ENCODE measurements at regions of chrX and their contacts with region 1.

Region 1: DNA sequence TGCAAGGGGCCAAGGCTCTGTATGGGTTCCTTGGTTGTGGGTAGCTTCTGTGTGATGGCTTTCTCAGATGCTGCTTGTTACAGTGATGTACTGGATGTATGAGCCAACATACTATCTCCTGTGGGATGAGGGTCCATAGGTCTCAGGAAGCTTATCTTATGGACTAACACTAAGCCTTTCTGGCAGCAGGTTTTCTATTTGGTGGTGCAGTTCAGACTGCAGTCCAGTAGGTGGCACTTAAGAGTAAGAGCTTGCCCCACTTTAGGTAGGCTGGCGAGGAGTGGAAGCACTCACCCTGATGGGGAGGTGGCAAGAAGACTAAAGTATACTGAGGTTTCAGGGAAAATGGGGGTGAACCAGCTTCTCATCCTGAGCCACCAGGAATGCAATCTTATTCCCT is 306.7 kb upstream of the MAOA start:
- DNase-seq: peak; percentile 1
- ATAC-seq: peak; percentile 85
- H3K4me3 ChIP-seq: no peak overlapping the region
- H3K27ac ChIP-seq: no peak overlapping the region
- H3K4me1 ChIP-seq: no peaks in the 10 kb centered on the region; the same call in 1 of the 2 replicates
- H3K27me3 ChIP-seq: no peaks in the 10 kb centered on the region; a peak in 1 of 4 replicates
- CTCF ChIP-seq: peak; percentile 70 to 83 (median 80)
- EP300 ChIP-seq: no peak
- POLR2A ChIP-seq: no peak
- RAD21 ChIP-seq: peak; percentile 71

Region 2: DNA sequence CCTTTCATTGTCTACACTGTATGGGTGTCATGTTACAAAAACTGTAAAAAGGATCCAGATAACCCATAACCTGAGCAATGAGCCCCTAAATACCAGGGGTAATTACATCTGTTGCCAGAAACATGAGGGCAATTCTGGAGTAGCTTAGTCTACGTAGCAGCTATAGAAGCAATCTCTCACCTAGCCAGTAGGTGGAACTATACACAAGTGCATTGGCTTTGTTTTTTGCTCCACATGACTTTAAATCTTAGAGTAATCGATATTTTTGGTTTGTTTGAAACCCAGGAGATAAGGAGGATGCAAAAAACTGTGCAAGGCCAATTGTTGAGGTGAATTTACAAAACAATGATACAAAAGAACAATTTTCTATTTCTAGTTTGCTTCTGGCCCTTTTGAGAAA is 1567.9 kb before region 1 on chrX:
- CTCF ChIA-PET with region 1: interaction called, 4 read pairs
- POLR2A ChIA-PET with region 1: no interaction called
- RAD21 ChIA-PET with region 1: no interaction called
- SMC1A ChIA-PET with region 1: no interaction called
- in situ Hi-C with region 1: loop called (anchors 10 kb)
- intact Hi-C with region 1: no loop called
- DNase-seq: no peak
- ATAC-seq: peak; percentile 93
- H3K4me3 ChIP-seq: no peak overlapping the region
- H3K27ac ChIP-seq: no peak overlapping the region
- H3K4me1 ChIP-seq: no peaks in the 10 kb centered on the region
- H3K27me3 ChIP-seq: no peaks in the 10 kb centered on the region
- CTCF ChIP-seq: peak; percentile 67 to 80 (median 71)
- EP300 ChIP-seq: no peak
- POLR2A ChIP-seq: no peak
- RAD21 ChIP-seq: peak; percentile 80

Region 3: DNA sequence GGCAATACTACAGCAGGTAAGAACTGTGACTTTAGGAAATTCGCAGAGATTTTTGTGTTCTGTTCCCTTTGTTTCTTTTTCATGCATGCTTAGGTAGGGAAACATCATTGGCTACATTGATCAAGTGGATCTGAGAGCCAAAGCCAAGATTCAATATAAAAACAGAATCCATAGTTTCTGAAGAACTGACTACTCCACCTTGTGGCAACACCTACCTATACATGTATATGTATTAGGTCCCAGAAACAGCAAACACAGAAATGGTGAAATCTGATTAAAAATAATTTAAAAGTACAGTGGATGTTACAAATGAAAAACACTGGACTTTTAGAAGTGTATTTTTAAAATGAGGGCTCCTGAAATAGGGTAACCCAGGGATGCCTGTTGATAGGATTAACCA is 15.8 kb before region 1 on chrX:
- CTCF ChIA-PET with region 1: interaction called, 14 read pairs
- POLR2A ChIA-PET with region 1: no interaction called
- RAD21 ChIA-PET with region 1: no interaction called
- SMC1A ChIA-PET with region 1: no interaction called
- in situ Hi-C with region 1: no loop called
- intact Hi-C with region 1: no loop called
- DNase-seq: no peak
- ATAC-seq: no peak
- H3K4me3 ChIP-seq: no peak overlapping the region
- H3K27ac ChIP-seq: no peak overlapping the region
- H3K4me1 ChIP-seq: no peaks in the 10 kb centered on the region
- H3K27me3 ChIP-seq: no peaks in the 10 kb centered on the region
- CTCF ChIP-seq: peak in 1 of 3 experiments; percentile 8; a peak in 1 of 6 replicates
- EP300 ChIP-seq: no peak
- POLR2A ChIP-seq: no peak
- RAD21 ChIP-seq: no peak

Region 4: DNA sequence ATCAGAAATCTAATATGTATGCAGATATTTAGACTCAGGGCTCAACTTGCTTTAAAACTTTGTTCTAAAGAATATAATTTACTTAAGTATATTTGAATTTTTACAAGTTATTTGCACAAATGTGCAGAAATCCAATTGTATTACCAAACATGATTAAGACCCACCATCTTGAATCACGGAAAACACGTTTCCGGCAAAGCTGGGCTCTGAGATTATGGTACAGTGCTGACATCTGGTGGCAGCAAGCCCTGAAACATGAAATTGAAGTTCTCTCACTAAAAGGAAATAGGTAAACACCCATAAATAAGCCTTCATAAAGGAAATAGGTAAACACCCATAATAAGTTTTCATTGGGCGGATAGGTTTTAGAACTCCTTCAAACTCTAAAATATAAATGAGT is 208.4 kb after region 1 on chrX:
- CTCF ChIA-PET with region 1: interaction called, 23 read pairs
- POLR2A ChIA-PET with region 1: no interaction called
- RAD21 ChIA-PET with region 1: interaction called, 16 read pairs
- SMC1A ChIA-PET with region 1: interaction called, 8 read pairs
- in situ Hi-C with region 1: loop called (anchors 10 kb)
- intact Hi-C with region 1: loop called (anchors 2 kb)
- DNase-seq: peak; percentile 23
- ATAC-seq: peak; percentile 78
- H3K4me3 ChIP-seq: no peak overlapping the region
- H3K27ac ChIP-seq: no peak overlapping the region
- H3K4me1 ChIP-seq: no peaks in the 10 kb centered on the region
- H3K27me3 ChIP-seq: no peaks in the 10 kb centered on the region
- CTCF ChIP-seq: peak; percentile 60 to 83 (median 75); a peak in 5 of 6 replicates
- EP300 ChIP-seq: no peak
- POLR2A ChIP-seq: no peak
- RAD21 ChIP-seq: peak; percentile 90

Region 5: DNA sequence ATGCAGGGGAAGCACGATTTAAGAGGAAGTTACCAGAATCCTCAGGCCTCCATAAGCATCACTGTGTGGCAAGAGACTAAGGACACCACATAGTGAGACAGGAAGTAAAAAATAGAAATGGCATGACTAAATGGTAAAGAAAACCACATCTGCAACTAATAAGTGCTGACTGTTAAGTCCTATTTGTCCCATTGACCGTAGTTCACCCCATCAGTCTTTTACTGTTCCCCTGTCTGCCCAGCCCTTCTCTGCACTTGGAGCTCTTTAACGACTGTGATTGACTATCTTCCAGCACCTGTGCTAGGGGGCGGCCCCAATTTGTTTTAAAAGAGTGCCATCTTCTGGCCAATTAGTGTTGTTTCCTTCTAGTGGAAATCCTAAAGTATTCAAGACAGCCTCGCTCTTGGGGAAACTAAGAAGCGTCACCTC is 400.9 kb after region 1 on chrX:
- CTCF ChIA-PET with region 1: interaction called, 7 read pairs
- POLR2A ChIA-PET with region 1: no interaction called
- RAD21 ChIA-PET with region 1: no interaction called
- SMC1A ChIA-PET with region 1: no interaction called
- in situ Hi-C with region 1: no loop called
- intact Hi-C with region 1: loop called (anchors 5 kb)
- DNase-seq: no peak
- ATAC-seq: peak; percentile 95
- H3K4me3 ChIP-seq: no peak overlapping the region
- H3K27ac ChIP-seq: no peak overlapping the region
- H3K4me1 ChIP-seq: no peaks in the 10 kb centered on the region
- H3K27me3 ChIP-seq: no peaks in the 10 kb centered on the region; a peak in 1 of 4 replicates
- CTCF ChIP-seq: peak; percentile 45 to 65 (median 51); a peak in 5 of 6 replicates
- EP300 ChIP-seq: no peak
- POLR2A ChIP-seq: no peak
- RAD21 ChIP-seq: peak; percentile 78

Measured in GM12878 (cell line).